ENCODE measurements at regions of chr19 and their contacts with region 1.

Region 1: GRCh38 chr19:5001615-5002014 is 32.7 kb downstream of the KDM4B start:
- DNase-seq: no peak
- H3K4me3 ChIP-seq: no peak overlapping the region
- CTCF ChIP-seq: peak; percentile 77

Region 2: GRCh38 chr19:4980810-4981680 is 20.6 kb before region 1 on chr19:
- CTCF ChIA-PET with region 1: interaction called, 32 read pairs
- POLR2A ChIA-PET with region 1: no interaction called
- DNase-seq: no peak
- H3K4me3 ChIP-seq: no peak overlapping the region
- CTCF ChIP-seq: no peak

Region 3: GRCh38 chr19:4988770-4989251 is 12.8 kb before region 1 on chr19:
- CTCF ChIA-PET with region 1: interaction called, 32 read pairs
- POLR2A ChIA-PET with region 1: no interaction called
- DNase-seq: no peak
- H3K4me3 ChIP-seq: no peak overlapping the region
- CTCF ChIP-seq: no peak

Region 4: GRCh38 chr19:5011476-5012238 is 10.0 kb after region 1 on chr19:
- CTCF ChIA-PET with region 1: interaction called, 29 read pairs
- POLR2A ChIA-PET with region 1: no interaction called
- DNase-seq: no peak
- H3K4me3 ChIP-seq: no peak overlapping the region
- CTCF ChIP-seq: no peak

Region 5: DNA sequence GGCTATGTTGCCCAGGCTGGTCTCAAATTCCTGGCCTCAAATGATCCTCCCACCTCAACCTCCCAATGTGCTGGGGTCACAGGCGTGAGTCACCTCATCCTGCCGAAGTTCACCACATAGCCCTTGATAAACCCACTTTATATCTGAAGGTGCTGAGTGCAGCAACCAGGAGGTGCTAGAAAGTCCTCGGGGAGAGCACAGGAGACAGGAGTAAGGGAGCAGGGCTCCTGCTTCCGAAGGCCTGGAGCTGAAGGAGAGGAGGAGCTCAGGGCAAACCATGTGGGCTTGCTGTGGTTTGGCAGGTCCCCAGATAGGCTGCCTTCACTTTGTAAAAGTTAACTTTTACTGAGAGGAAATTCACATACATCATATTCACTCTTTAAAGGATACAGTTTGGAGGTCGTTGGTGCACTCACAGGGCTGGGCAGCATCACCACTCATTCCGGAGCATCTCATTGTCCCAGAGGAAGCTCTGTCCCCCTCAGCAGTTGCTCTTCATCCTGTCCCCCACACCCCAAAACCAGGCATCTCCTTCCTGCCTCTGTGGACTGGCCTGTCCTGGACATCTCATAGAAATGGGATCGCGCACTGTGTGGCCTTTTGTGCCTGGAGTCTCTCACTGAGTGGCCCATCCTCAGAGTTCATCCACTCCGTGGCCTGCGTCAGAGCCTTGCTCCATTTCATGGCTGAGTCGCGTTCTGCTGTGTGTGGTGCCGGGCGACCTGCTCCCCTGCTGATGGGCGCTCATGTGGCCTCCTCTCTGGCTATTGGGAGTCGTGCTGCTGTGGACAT is 16.8 kb after region 1 on chr19:
- CTCF ChIA-PET with region 1: interaction called, 29 read pairs
- POLR2A ChIA-PET with region 1: no interaction called
- DNase-seq: no peak
- H3K4me3 ChIP-seq: no peak overlapping the region
- CTCF ChIP-seq: no peak

Measured in AG04449 (cell line).